ENCODE measurements at regions of chr2 and their contacts with region 1.

Region 1: GRCh38 chr2:25951071-25951547 is 31.2 kb downstream of the KIF3C start:
- DNase-seq: peak; percentile 95 to 97
- ATAC-seq: peak; percentile 92 to 95
- H3K4me3 ChIP-seq: peak overlapping the region; percentile 15; the same call in 2 of the 3 replicates
- H3K27ac ChIP-seq: peak overlapping the region; percentile 60 to 77
- H3K4me1 ChIP-seq: peaks cover 27% of the 10 kb centered on the region
- CTCF ChIP-seq: peak; percentile 99
- EP300 ChIP-seq: no peak
- POLR2A ChIP-seq: no peak
- RAD21 ChIP-seq: peak; percentile 100

Region 2: GRCh38 chr2:25936889-25937545 is 14.1 kb before region 1 on chr2:
- CTCF ChIA-PET with region 1: interaction called, 48 read pairs
- POLR2A ChIA-PET with region 1: interaction called, 3 read pairs
- DNase-seq: no peak
- ATAC-seq: no peak; a peak in 1 of 6 replicates
- H3K4me3 ChIP-seq: no peak overlapping the region
- H3K27ac ChIP-seq: no peak overlapping the region; a peak in 1 of 6 replicates
- H3K4me1 ChIP-seq: no peaks in the 10 kb centered on the region
- CTCF ChIP-seq: no peak
- EP300 ChIP-seq: no peak
- POLR2A ChIP-seq: no peak
- RAD21 ChIP-seq: no peak

Region 3: GRCh38 chr2:25991965-25992364 is 40.9 kb after region 1 on chr2:
- CTCF ChIA-PET with region 1: interaction called, 96 read pairs
- POLR2A ChIA-PET with region 1: no interaction called
- DNase-seq: no peak
- ATAC-seq: peak; percentile 70 to 71; a peak in 5 of 6 replicates
- H3K4me3 ChIP-seq: 0 out of 3 replicates have a peak overlapping the region, but pooled peaks have one; percentile 5
- H3K27ac ChIP-seq: peak overlapping the region; percentile 80 to 93
- H3K4me1 ChIP-seq: peaks cover 25% of the 10 kb centered on the region
- CTCF ChIP-seq: no peak
- EP300 ChIP-seq: no peak
- POLR2A ChIP-seq: no peak
- RAD21 ChIP-seq: no peak

Region 4: DNA sequence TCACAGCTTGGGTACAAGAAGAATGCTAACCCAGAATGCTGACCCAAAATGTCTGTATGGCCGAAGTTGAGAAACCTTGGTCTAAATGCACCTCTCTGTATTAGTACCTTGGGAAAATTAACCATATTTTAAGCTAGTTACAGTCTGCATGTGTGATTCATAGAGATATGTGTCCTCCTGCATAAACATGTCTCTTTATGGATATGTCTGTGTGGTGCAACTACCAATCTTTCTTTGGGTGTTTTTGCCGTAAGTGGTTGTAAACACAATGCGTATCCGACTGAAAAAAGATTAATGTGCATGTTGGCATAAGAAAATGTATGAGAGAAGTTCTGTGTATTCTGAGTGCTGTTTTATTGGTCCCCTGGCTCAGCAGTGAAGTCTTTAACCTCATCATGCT is 167.6 kb after region 1 on chr2:
- CTCF ChIA-PET with region 1: interaction called, 13 read pairs
- POLR2A ChIA-PET with region 1: no interaction called
- DNase-seq: no peak
- ATAC-seq: peak; percentile 15 to 32; a peak in 2 of 6 replicates
- H3K4me3 ChIP-seq: no peak overlapping the region
- H3K27ac ChIP-seq: no peak overlapping the region
- H3K4me1 ChIP-seq: no peaks in the 10 kb centered on the region; the same call in 2 of the 3 replicates
- CTCF ChIP-seq: no peak
- EP300 ChIP-seq: no peak
- POLR2A ChIP-seq: no peak
- RAD21 ChIP-seq: no peak

Region 5: DNA sequence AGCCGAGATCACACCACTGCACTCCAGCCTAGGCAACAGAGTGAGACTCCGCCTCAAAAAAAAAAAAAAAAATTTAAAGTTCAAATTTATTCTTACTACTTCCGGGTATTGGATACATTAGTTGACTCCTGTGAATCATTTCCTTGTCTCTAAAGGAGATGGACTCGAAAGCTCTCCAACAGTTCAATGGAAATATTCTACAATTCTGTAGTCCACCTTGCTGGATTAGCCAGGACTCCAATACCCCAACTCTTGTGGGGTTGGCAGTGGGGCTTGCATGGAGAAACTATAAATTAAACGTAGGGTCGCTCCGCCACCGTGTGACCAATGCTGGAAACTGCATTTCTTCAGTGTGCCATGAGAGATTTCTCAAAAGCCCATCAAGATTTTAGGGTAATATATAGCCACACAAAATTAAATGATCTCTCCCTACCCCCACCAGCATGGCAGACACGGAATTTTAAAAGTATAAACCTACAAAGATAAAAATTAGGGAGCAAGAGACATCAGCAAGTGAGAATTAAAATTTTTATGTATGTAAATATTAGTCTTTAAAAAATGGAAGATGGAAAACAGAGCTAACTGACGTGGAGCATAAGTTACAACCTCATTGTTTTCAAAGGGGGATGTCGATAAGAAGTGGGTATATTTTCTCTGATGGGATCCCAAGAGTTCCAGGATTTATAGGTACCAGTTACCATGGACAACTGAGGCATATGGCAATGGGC is 194.0 kb after region 1 on chr2:
- CTCF ChIA-PET with region 1: interaction called, 280 read pairs
- POLR2A ChIA-PET with region 1: no interaction called
- DNase-seq: peak; percentile 77 to 79
- ATAC-seq: peak; percentile 57 to 61; a peak in 5 of 6 replicates
- H3K4me3 ChIP-seq: no peak overlapping the region
- H3K27ac ChIP-seq: peak overlapping the region; percentile 64 to 76
- H3K4me1 ChIP-seq: peaks cover 25% of the 10 kb centered on the region
- CTCF ChIP-seq: peak; percentile 98
- EP300 ChIP-seq: no peak
- POLR2A ChIP-seq: no peak
- RAD21 ChIP-seq: peak; percentile 98 to 99